ENCODE measurements at regions of chr3 and their contacts with region 1.

Region 1: DNA sequence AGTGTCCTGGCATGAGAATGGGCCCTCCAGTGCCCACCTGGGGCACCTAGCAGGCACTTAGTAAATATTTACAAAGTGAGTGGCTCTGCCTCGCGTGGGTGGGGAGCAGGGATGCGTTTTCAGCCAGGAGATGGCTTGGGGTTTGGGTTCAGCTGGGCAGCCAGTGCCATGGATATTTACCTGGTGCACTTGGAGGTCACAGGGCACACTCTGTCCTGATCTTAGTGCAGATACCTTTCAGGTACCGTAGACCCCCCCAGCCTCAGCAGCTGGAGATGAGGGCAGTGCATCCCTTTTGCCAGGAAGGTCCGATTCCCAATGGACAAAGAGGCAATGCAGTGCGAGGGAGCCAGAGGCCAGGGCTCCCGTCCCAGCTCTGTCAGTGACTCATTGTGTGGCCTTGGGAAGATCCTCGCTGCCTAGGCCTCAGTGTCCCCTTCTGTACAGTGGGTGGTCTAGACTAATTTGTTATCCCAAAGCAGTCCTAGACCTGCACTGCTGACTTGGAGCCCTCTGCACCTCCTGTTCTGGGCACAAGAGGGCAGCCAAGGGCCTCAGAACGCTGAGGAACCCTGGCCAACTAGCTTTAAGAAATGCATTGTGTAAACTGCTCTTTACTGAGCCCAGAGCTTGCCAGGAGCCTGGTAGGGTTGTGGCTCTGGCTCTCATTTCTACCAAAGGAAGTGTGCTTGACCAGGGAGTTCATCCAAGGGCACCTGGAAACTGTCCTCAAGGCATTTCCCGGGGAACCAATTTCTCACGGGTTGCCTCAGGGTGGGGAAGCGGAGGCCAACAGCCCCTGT is 16.0 kb downstream of the HDAC11 start:
- DNase-seq: peak; percentile 64 to 81 (median 80)
- ATAC-seq: peak; percentile 92
- H3K4me3 ChIP-seq: no peak overlapping the region
- H3K4me1 ChIP-seq: no peaks in the 10 kb centered on the region
- CTCF ChIP-seq: peak; percentile 92

Region 2: DNA sequence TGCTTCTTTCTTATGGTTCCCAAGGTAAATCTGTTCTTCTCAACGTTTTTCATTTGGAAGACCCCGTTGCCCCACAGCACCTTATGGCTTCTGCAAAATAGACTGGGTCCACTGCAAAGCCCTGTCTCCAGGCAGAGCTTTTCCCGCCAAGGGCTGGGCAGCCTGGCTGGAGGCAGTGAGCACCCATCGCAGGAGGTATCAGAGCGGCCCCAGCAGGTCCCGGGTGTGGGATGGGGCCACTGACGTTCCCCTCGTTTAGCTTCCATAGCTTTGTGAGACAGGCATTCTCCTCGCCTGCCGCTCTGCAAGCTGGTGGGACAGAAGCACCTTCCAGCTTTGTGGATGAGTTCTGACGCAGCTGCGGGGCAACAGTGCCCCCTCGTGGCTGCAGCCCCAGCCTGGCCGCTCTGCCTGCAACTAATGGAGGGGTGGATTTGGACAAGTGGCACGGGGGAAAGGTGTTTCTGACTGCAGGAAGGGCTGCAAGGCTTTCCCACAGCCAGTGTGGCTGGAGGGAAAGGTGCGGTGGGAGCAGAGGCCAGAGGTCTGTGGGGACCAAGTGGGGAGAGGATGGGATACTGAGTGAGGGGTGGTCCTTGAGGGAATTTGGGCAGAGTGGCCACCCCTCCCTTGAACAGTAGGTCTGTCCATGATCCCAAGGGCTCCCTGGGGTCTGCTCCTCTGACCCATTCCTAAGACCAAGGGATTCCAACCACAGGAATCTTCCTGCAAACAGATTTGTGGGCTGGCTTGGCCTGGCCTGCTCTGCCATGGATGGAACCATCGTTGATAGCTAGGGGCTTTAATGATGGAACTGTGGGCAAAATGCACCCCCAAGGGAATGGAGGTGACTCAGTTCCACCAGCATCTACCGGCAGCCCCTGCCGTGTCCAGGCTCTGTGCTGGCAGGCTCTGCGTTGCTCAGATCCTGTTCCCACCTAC is 152.2 kb after region 1 on chr3:
- intact Hi-C with region 1: loop called in 1 of 2 experiments (anchors 5 kb)
- DNase-seq: peak in 2 of 3 donors; percentile 84 to 87
- ATAC-seq: peak; percentile 76
- H3K4me3 ChIP-seq: no peak overlapping the region
- H3K4me1 ChIP-seq: peaks cover 5% of the 10 kb centered on the region
- CTCF ChIP-seq: peak; percentile 96

Region 3: GRCh38 chr3:13657660-13658435 is 161.7 kb after region 1 on chr3:
- intact Hi-C with region 1: loop called in 1 of 2 experiments (anchors 5 kb)
- DNase-seq: peak in 2 of 3 donors; percentile 51 to 59
- ATAC-seq: peak; percentile 73
- H3K4me3 ChIP-seq: no peak overlapping the region
- H3K4me1 ChIP-seq: no peaks in the 10 kb centered on the region
- CTCF ChIP-seq: peak; percentile 68

Measured in mucosa of descending colon (tissue), 3 donors.